ENCODE measurements at regions of chr7 and their contacts with region 1.

Region 1: GRCh38 chr7:27196287-27196767 is 3.6 kb downstream of the HOXA13 start:
- DNase-seq: no peak
- H3K4me3 ChIP-seq: no peak overlapping the region
- CTCF ChIP-seq: peak; percentile 72

Region 2: DNA sequence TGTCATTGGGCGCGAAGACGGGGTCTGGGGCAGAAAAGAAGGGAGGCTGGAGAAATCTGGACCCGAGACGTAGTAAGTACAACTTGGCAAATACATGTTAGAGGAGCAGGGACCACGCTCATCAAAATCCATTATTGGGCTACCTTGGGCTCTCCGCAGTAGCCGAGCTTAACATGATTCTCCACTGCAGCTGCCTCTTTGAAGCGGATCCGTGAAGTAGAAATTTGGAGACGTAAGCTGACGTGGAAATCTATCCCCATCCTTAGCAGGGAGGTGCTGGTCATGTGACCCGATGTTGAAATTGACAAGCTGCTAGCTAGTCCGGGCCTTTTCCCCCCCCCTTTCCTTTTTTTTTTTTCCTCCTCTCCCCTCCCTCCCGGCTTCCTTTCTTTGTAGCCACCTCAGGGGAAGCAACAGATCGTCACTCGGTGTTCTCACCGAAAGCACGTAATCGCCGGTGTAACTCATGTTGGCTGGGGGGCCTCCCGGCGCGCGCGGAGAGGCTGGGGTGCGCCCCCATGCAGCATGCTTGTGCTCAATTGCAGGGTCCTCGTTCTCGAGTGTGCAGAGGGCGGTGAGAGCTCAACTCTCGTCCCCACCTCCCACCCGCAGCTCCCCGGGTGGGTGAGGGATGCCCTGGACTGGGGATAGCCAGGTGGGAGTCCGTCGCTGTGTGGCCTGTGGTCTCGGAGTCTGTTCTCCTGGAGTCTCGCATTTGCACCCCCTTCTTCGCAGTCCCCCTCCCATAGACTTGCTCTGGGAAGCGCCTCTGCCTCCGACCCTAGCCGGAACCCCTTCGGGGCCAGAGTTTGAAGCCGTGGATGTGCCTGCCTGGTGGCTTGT is 11.1 kb before region 1 on chr7 and contains the start of gene HOXA11:
- CTCF ChIA-PET with region 1: interaction called, 51 read pairs
- POLR2A ChIA-PET with region 1: no interaction called
- DNase-seq: no peak
- H3K4me3 ChIP-seq: peak within 1 kb of the TSS; percentile 70
- CTCF ChIP-seq: no peak

Region 3: DNA sequence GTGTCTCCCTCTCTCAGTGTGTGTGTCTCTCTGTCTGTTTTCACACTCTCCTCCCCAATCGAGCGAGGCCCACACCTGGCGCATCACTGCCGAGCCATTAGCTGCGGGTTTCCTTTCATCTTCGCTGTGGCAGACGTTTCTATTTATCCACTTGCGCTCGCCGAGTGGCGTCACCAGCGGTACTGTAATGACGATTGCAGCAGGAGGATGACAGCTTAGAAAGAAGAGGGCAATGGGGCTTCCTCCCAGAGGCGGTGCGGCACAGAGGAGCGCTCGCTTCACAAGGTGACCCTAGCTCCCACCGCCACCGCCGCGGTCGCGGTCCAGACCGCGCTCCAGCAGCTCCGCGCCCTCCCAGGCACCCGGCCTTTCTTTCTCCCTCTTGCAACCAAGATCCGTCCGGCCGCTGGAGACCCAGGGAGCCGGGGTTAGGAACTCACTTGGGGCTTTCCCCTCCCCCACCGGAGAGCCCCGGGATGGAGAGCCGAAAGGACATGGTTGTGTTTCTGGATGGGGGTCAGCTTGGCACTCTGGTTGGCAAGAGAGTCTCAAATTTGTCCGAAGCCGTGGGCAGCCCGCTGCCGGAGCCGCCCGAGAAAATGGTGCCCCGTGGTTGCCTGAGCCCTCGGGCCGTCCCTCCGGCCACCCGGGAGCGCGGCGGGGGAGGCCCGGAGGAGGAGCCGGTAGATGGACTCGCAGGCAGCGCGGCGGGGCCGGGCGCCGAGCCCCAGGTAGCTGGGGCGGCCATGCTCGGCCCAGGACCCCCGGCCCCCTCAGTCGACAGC is 46.4 kb after region 1 on chr7 and contains the start of gene EVX1:
- CTCF ChIA-PET with region 1: no interaction called
- POLR2A ChIA-PET with region 1: no interaction called
- DNase-seq: no peak
- H3K4me3 ChIP-seq: peak within 1 kb of the TSS; percentile 18; the same call in 1 of the 2 replicates
- CTCF ChIP-seq: no peak

Region 4: DNA sequence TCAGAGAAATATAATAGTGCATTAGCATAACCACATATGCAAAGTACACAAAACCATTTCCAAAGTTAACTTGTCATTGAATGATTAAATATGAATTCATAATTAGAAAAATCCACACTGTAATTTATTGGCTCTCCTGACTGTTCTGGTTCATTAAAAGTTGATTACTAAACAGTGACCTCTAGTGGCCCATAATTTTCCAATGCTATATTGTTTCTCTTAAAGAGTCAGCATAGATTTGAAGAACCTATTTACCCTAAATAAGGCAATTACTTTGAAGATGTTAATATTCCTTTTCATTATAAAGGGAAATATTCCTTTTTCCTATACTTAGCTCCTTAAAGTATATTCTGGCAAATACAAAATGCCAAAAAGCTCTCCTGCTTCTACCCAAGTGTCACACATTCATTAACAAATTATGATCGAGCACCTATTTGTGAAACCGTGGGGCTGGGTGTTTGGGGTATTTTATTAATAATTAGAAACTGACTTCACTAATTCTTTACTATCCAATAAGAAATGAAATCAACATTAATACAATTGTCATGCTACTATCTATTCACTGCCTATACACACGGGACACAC is 380.1 kb after region 1 on chr7:
- CTCF ChIA-PET with region 1: interaction called, 44 read pairs
- POLR2A ChIA-PET with region 1: no interaction called
- DNase-seq: no peak
- H3K4me3 ChIP-seq: no peak overlapping the region
- CTCF ChIP-seq: peak; percentile 37

Region 5: GRCh38 chr7:27739909-27740448 is 543.7 kb after region 1 on chr7 and contains the start of gene TAX1BP1:
- CTCF ChIA-PET with region 1: interaction called, 11 read pairs
- POLR2A ChIA-PET with region 1: no interaction called
- DNase-seq: peak; percentile 60
- H3K4me3 ChIP-seq: peak within 1 kb of the TSS; percentile 92
- CTCF ChIP-seq: no peak

Region 6: GRCh38 chr7:27784393-27785053 is 588.2 kb after region 1 on chr7:
- CTCF ChIA-PET with region 1: interaction called, 20 read pairs
- POLR2A ChIA-PET with region 1: no interaction called
- DNase-seq: no peak
- H3K4me3 ChIP-seq: no peak overlapping the region
- CTCF ChIP-seq: peak; percentile 10

Region 7: GRCh38 chr7:28020302-28020940 is 824.1 kb after region 1 on chr7:
- CTCF ChIA-PET with region 1: interaction called, 23 read pairs
- POLR2A ChIA-PET with region 1: no interaction called
- DNase-seq: no peak
- H3K4me3 ChIP-seq: no peak overlapping the region
- CTCF ChIP-seq: peak; percentile 80

Region 8: GRCh38 chr7:28096713-28097112 is 900.4 kb after region 1 on chr7:
- CTCF ChIA-PET with region 1: interaction called, 49 read pairs
- POLR2A ChIA-PET with region 1: no interaction called
- DNase-seq: no peak
- H3K4me3 ChIP-seq: no peak overlapping the region
- CTCF ChIP-seq: peak; percentile 76

Measured in AG04449 (cell line).